ENCODE measurements at regions of chr5 and their contacts with region 1.

Region 1: GRCh38 chr5:93582677-93583438 is at the start of gene NR2F1:
- DNase-seq: peak; percentile 94 to 98
- H3K4me3 ChIP-seq: peak within 1 kb of the TSS; percentile 48
- H3K4me1 ChIP-seq: peaks cover 18% of the 10 kb centered on the region
- H3K27me3 ChIP-seq: no peaks in the 10 kb centered on the region

Region 2: DNA sequence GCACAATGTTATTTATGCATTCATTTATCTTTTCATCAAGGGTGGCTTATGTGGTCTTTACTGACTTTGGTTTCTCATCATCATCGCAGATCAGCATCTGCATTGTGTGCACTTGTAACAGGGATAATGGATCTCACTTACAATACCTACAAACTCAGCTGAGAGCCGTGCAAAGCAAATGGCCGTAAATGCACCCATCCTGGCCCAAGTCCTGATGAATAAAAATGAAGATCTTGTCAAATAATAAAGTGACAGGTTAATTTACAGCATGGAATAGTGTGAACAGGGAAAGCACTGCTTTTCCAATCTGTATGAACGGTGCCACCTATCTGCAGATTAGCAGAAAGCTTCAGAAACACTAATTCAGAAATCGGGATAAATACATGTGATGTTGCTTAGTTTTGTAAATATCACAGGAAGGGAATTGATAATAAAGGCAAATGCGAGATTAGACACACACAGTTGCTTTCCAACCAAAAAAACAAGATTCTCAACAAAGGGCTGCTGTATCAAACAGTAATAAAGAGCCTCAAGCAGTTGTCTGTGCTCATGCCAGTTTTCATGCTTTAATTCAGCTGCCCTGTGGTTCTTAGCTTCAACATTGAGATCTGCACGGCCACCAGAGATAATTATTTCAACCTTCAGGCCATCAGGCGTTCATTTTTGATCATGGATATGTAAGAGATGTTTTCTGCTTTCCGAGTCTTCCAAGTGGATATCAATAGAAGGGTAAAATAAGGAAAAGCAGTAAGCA is 311.9 kb after region 1 on chr5:
- in situ Hi-C with region 1: loop called (anchors 5 kb)
- DNase-seq: peak; percentile 56 to 78
- H3K4me3 ChIP-seq: no peak overlapping the region
- H3K4me1 ChIP-seq: peaks cover 46% of the 10 kb centered on the region
- H3K27me3 ChIP-seq: no peaks in the 10 kb centered on the region

Measured in HAP-1 (cell line).